Transverse colon (tissue), 4 donors: ENCODE measurements at regions of chr2 and their contacts with region 1.

Region 1: DNA sequence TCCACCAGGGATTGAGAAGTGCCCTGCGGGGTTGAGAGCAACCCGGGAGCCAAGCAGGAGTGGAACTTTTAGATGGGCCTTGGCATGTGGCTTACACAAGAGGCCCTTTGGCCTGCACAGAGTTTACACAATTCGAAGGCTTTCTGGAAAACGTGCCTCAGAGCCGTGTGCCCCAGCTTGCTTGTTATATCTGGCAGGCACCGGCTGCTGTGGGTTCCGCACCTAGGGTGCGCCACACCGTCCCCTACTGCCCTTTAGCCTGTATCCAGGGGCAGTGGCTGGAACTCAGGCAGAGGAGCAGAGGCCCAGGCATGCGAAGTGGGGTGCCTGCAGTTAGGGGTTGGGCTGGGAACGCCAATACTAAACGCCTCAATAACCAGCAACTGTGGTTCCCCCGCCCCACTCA is 32.9 kb upstream of the EDAR start:
- DNase-seq: no peak
- H3K4me3 ChIP-seq: no peak overlapping the region
- H3K27ac ChIP-seq: no peak overlapping the region
- H3K4me1 ChIP-seq: no peaks in the 10 kb centered on the region
- H3K27me3 ChIP-seq: no peaks in the 10 kb centered on the region
- CTCF ChIP-seq: no peak
- EP300 ChIP-seq: no peak
- POLR2A ChIP-seq: no peak

Region 2: GRCh38 chr2:108423502-108424252 is 598.2 kb before region 1 on chr2:
- in situ Hi-C with region 1: no loop called
- intact Hi-C with region 1: no loop called
- DNase-seq: no peak
- H3K4me3 ChIP-seq: no peak overlapping the region
- H3K27ac ChIP-seq: no peak overlapping the region
- H3K4me1 ChIP-seq: no peaks in the 10 kb centered on the region
- H3K27me3 ChIP-seq: no peaks in the 10 kb centered on the region
- CTCF ChIP-seq: no peak
- EP300 ChIP-seq: no peak
- POLR2A ChIP-seq: no peak

Region 3: GRCh38 chr2:109062859-109063700 is 41.2 kb after region 1 on chr2:
- in situ Hi-C with region 1: no loop called
- intact Hi-C with region 1: loop called (anchors 1 kb)
- DNase-seq: no peak
- H3K4me3 ChIP-seq: no peak overlapping the region
- H3K27ac ChIP-seq: no peak overlapping the region
- H3K4me1 ChIP-seq: peaks cover 0 to 16% (median 5%) of the 10 kb centered on the region in 4 donors
- H3K27me3 ChIP-seq: no peaks in the 10 kb centered on the region
- CTCF ChIP-seq: no peak
- EP300 ChIP-seq: no peak
- POLR2A ChIP-seq: no peak

Region 4: DNA sequence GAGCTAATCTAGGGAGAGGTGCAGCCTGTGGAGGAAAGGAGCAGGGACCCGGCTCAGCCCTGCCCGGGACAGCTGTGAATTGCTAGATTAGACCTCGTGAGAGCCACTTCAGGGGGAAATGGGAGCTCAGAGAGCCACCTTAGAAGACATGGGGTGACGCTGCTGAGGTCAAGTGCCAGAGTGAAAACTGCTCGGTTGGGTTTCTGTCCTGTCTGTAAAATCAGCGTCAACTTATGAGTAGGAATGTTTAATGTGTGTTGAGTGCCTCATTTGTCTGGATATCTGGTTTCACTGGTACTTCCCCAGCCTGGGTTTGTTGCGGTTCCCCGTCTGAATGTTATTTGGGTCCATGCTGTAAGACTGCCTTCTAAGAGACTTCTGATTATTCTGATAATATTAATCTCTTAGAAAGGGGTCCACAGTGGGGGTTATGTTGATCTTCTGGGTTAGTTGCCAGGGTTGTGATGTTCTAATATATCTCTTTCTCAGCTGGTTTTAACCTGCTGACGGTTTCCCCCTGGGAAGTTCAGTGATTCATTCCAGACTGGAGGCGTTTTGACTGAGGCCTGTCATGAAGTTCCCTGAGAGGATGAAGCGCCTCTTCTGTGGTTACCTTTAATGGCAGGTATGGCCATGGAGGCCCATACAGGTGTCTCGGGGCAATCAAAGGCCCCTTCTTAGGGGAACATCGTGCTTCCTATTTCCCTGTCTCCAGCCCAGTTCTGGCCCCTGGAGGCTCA is 283.0 kb after region 1 on chr2:
- in situ Hi-C with region 1: no loop called
- intact Hi-C with region 1: no loop called
- DNase-seq: no peak
- H3K4me3 ChIP-seq: no peak overlapping the region
- H3K27ac ChIP-seq: no peak overlapping the region
- H3K4me1 ChIP-seq: no peaks in the 10 kb centered on the region
- H3K27me3 ChIP-seq: no peaks in the 10 kb centered on the region
- CTCF ChIP-seq: no peak
- EP300 ChIP-seq: no peak
- POLR2A ChIP-seq: no peak